ENCODE measurements at regions of chr14 and their contacts with region 1.

Region 1: DNA sequence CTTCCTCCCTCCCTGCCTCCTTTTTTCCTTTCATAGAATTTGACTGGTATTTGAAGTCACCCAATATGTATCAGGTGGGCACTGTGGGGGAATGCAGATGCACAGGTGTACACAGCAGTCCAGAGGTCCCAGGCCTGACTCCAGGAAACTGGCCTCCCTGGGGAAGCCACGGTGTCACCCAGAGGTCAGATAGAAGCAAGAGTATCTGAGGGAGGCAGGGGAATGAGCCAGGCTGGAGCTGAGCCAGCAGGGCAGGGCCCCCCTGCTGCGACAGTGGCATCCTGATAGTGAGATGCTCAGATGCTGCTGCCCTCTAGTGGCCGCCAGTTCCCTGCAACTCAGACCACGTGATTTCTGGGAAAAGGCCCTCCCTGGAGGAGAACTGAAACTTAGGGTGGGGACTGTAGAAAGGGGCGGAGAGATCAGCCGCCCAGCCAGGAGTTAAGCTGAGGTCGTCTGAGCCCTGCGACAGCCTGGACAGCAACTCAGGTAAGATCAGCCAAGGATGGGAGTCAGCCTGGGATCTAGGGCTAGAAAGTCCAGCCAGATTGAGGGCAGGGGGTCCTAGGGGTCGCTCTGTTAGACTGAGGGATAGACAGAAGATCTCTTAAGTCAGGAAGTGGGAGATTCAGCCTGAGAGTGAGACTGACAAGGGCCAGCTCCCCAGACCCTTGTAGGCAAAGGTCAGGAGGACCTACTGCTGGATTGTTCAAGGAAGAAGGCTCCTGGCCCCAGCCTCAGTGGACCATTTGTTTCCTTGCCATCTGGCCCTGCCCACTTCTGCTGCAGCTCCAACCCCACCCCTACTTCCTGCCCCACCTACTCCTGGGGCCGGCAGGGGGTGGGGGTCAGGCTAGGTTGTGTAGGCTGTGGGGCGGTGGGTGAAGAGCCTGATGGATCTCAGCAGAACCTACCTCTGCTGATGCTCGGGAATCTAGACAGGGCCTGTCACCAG is at the start of gene IRF9:
- DNase-seq: peak; percentile 99
- ATAC-seq: peak; percentile 86
- H3K4me3 Mint-ChIP-seq: peak within 1 kb of the TSS; percentile 92
- H3K27ac Mint-ChIP-seq: peak within 1 kb of the TSS; percentile 100
- H3K4me1 Mint-ChIP-seq: peaks cover 58% of the 10 kb centered on the region
- H3K27me3 Mint-ChIP-seq: no peaks in the 10 kb centered on the region
- total RNA-seq, gene IRF9: 221 to 242 TPM

Region 2: DNA sequence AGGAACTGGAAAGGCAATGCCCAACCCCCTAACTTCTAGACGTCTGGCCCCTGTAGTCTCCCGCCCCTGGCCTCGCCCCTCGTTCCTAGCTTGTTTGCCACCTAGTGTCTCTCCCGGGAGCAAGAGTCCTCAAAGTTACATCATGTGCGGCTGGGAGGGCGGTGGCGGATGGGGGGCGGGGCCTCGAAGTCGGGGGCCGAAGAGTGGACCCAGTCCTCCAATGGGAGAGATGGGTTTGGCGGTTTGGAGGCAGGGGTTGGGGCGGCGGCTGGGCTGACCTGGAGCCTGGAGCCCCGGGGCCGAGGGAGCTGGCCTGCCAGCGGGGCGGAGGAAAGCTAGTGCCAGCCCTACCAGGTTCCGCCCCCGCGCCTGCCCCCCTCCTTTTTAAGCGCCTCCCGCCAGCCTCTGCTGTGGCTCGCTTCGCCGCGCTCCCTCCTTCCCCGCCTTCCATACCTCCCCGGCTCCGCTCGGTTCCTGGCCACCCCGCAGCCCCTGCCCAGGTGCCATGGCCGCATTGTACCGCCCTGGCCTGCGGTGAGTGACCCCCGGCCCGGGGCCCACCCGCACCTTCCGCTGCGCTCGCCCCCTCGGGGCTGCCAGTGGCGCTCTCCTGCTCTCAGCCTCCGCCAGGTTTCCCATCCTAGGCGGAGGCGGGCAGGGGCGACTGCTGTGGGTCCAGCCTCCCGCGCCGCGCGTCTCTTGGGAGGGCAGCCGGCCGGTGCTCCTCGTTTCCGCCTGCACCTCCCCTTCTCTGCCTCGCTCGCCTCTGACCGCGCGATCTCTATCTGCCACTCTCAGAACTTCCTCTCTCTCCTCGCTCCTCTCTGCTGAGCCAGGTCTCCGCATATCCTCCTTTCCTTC is 67.0 kb before region 1 on chr14 and contains the start of gene PCK2:
- CTCF ChIA-PET with region 1: interaction called, 20 read pairs
- POLR2A ChIA-PET with region 1: interaction called, 29 read pairs
- DNase-seq: peak; percentile 84
- ATAC-seq: peak; percentile 80
- H3K4me3 Mint-ChIP-seq: peak within 1 kb of the TSS; percentile 100
- H3K27ac Mint-ChIP-seq: peak within 1 kb of the TSS; percentile 99
- H3K4me1 Mint-ChIP-seq: peaks cover 42% of the 10 kb centered on the region
- H3K27me3 Mint-ChIP-seq: no peaks in the 10 kb centered on the region
- total RNA-seq, gene PCK2: 49.6 to 54.9 TPM

Region 3: GRCh38 chr14:24135834-24136542 is 25.1 kb before region 1 on chr14 and contains the start of gene PSME1:
- CTCF ChIA-PET with region 1: interaction called, 37 read pairs
- POLR2A ChIA-PET with region 1: interaction called, 56 read pairs
- DNase-seq: peak; percentile 95
- ATAC-seq: peak; percentile 91
- H3K4me3 Mint-ChIP-seq: peak within 1 kb of the TSS; percentile 86
- H3K27ac Mint-ChIP-seq: peak within 1 kb of the TSS; percentile 91
- H3K4me1 Mint-ChIP-seq: peaks cover 55% of the 10 kb centered on the region
- H3K27me3 Mint-ChIP-seq: no peaks in the 10 kb centered on the region
- total RNA-seq, gene PSME1: 516 to 530 TPM

Region 4: DNA sequence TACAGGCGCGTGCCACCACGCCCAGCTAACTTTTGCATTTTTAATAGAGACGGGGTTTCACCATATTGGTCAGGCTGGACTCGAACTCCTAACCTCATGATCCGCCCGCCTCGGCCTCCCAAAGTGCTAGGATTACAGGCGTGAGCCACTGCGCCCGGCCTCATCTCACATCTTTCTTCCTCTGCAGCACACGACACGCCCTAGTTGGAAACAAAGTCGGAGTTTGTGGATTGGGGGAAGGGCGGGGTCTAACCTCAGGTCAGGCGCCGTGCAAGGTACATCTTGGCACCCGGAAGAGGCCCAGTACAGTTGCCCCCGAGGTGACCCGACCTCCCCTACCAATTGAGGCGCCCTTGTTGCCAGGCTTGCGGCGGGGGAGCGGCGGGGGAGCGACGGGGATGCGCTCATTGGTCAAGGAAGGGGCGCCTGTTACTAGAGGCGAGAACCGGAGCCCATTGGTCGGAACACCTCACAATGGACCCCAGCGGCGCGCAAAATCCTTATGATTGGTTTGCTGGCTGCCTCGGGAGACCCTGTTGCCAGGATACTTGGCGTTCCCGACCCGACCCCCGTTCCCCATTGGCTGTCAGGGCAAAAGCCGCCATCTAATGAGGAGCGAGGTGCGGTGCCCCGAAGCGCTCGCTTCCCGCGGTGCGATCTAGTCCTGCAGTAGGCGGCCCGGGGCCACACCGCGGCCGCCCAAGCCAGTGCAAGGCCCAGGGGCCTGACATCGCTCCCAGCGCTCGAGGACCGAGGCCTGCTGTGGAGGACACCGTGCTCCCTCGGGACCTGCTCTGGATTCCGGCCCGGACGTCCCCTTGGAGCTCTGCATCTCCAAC is 10.5 kb after region 1 on chr14 and contains the start of gene REC8:
- CTCF ChIA-PET with region 1: interaction called, 7 read pairs
- POLR2A ChIA-PET with region 1: interaction called, 74 read pairs
- DNase-seq: peak; percentile 85
- ATAC-seq: peak; percentile 77
- H3K4me3 Mint-ChIP-seq: peak within 1 kb of the TSS; percentile 77
- H3K27ac Mint-ChIP-seq: peak within 1 kb of the TSS; percentile 81
- H3K4me1 Mint-ChIP-seq: peaks cover 50% of the 10 kb centered on the region
- H3K27me3 Mint-ChIP-seq: no peaks in the 10 kb centered on the region
- total RNA-seq, gene REC8: 54.5 to 58.6 TPM

Region 5: DNA sequence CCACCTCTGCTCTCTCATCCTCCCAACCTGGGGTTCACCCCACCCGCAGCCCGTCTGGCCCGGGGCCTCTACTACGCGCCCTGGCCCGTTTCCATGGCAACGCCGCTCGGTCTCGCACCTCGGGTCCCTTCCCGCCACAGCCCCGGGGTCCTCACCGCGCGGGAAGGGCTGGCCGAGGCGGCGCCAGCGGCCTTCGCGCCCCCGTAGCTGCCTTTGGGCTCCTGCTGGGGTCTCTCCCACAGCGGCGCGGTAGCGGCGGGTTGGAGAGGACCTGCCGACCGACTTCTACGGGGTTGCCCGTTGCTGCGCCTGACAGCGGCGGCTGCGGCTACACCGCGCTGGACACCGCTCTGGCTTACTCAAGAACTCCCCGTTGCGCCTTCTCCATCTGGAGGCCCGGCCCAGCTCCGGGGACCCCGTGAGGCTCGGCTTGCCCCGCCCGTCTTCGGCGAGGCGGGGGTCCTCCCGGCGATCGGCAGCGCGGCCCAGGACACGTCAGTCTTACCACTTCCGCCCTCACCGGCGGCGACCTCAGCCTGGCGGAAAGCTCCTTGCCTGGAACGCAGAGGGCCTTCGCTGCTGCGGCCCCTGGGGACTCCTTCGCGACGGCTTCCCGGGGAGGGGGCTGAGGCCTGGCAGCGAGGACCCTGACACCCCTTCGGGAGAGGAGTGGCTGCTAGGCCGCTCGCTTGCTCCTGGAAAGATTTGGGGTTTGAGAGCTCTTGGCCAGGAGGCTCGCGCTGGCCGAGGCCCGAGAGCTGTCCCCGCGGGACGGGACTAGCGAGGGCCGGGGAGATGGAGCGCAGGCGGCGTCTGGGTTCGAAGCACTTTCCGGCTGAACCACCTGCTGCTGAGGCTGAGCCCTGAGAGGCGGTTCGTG is 34.3 kb after region 1 on chr14 and contains the start of gene TM9SF1:
- CTCF ChIA-PET with region 1: interaction called, 9 read pairs
- POLR2A ChIA-PET with region 1: interaction called, 58 read pairs
- DNase-seq: peak; percentile 92
- ATAC-seq: peak; percentile 88
- H3K4me3 Mint-ChIP-seq: peak within 1 kb of the TSS; percentile 88
- H3K27ac Mint-ChIP-seq: peak within 1 kb of the TSS; percentile 96
- H3K4me1 Mint-ChIP-seq: peaks cover 56% of the 10 kb centered on the region
- H3K27me3 Mint-ChIP-seq: no peaks in the 10 kb centered on the region
- total RNA-seq, gene TM9SF1: 29.3 to 32.8 TPM